ENCODE measurements at regions of chr9 and their contacts with region 1.

Region 1: DNA sequence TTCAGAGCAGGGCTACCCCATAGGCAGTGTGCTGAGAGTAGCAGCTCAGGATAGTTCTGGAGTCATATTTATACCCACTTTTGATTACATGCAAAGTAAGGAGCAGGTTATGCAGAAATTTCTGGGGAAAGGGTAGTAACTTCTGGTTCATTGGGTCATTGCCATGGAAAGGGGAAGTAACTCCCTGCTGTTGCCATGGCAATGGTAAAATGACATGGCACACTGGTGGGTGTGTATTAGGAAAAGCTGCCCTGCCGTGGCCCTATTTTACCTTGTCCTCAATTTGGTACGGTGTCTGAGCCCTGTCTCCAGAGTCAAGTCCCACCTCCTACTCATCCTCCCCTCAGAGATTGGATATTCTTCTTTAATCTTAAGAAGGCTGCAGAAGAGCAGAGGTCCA is 526.7 kb upstream of the TYRP1 start:
- DNase-seq: no peak
- H3K4me3 ChIP-seq: no peak overlapping the region
- H3K27ac ChIP-seq: no peak overlapping the region
- H3K27me3 ChIP-seq: no peaks in the 10 kb centered on the region
- CTCF ChIP-seq: no peak

Region 2: DNA sequence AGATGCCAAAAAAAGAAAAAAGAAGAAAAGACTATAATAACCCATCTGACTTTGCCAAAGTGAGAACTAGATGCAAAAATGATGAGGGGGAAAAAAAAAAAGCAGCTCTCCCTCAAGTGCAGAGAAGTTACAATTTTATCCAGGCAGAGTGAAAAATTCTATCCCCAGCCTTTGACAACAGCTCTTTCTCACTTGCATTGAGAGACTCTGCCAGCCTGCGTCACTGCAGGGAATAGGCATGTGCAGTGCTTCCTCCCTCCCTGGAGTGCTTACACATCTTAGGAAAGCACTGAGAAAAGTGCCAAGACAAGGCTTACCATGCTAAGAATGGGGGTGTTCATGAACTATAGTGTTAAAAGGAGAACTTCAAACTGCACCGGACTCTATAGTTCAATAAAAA is 108.1 kb after region 1 on chr9:
- intact Hi-C with region 1: loop called in 1 of 2 experiments (anchors 10 kb)
- DNase-seq: peak in 8 of 10 donors; percentile 44 to 72 (median 65)
- H3K4me3 ChIP-seq: no peak overlapping the region
- H3K27ac ChIP-seq: peak overlapping the region in 8 of 59 donors; percentile 2 to 77 (median 28)
- H3K27me3 ChIP-seq: no peaks in the 10 kb centered on the region
- CTCF ChIP-seq: no peak

Region 3: GRCh38 chr9:12680341-12680740 is 513.8 kb after region 1 on chr9:
- intact Hi-C with region 1: no loop called
- DNase-seq: no peak
- H3K4me3 ChIP-seq: no peak overlapping the region
- H3K27ac ChIP-seq: no peak overlapping the region
- H3K27me3 ChIP-seq: no peaks in the 10 kb centered on the region
- CTCF ChIP-seq: no peak